ENCODE measurements at regions of chr9 and their contacts with region 1.

Region 1: DNA sequence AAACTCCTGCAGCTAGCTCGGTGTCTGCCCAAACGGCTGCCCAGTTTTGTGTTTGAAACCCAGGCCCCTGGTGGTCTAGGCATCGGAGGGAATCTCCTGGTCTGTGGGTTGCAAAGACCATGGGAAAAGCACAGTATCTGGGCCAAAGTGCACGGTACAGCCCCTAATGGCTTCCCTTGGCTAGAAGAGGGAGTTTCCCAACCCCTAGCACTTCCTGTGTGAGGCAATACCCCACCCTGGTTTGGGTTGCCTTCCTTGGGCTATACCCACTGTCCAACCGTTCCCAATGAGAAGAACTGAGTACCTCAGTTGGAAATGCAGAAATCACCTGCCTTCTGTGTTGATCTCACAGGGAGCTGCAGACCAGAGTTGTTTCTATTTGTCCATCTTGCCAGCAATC is 41.8 kb downstream of the CAVIN4 start:
- DNase-seq: no peak
- ATAC-seq: no peak
- H3K4me3 ChIP-seq: no peak overlapping the region
- H3K27ac ChIP-seq: no peak overlapping the region
- H3K4me1 ChIP-seq: no peaks in the 10 kb centered on the region
- H3K27me3 ChIP-seq: peaks cover 0 to 3% (median 0%) of the 10 kb centered on the region in 9 donors
- CTCF ChIP-seq: no peak
- POLR2A ChIP-seq: no peak

Region 2: GRCh38 chr9:100575765-100576386 is 43.8 kb before region 1 on chr9:
- intact Hi-C with region 1: no loop called
- DNase-seq: no peak
- ATAC-seq: no peak
- H3K4me3 ChIP-seq: no peak overlapping the region
- H3K27ac ChIP-seq: no peak overlapping the region
- H3K4me1 ChIP-seq: no peaks in the 10 kb centered on the region
- H3K27me3 ChIP-seq: no peaks in the 10 kb centered on the region
- CTCF ChIP-seq: no peak
- POLR2A ChIP-seq: no peak

Region 3: DNA sequence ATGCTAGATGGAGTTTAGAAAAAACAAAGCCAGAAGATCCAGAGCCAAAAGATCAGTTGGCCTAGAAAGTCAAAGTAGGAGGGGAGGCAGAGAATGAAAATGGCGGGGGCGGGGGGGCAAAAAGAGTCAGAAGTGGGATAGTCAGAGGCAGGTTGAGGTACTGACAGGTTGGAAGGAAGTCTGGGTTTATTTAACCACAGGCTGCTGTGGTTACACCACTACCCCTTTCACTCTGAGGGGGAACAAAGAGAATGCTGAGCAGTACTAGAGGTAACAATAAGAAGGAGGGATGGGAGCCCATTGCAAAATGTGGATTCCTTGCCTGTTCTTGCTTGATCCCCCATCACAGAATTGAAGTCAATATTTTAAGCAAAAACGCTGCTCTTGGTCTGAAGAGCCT is 70.0 kb after region 1 on chr9:
- intact Hi-C with region 1: loop called in 1 of 10 experiments (anchors 10 kb)
- DNase-seq: no peak
- ATAC-seq: no peak
- H3K4me3 ChIP-seq: no peak overlapping the region
- H3K27ac ChIP-seq: no peak overlapping the region
- H3K4me1 ChIP-seq: no peaks in the 10 kb centered on the region
- H3K27me3 ChIP-seq: no peaks in the 10 kb centered on the region
- CTCF ChIP-seq: no peak
- POLR2A ChIP-seq: no peak

Measured in heart left ventricle (tissue), 16 donors.